CD4-positive, alpha-beta T cell (primary cell): ENCODE measurements at regions of chr12 and their contacts with region 1.

Region 1: GRCh38 chr12:124599074-124599999 is 31.9 kb upstream of the NCOR2 start:
- DNase-seq: peak in 2 of 14 experiments; percentile 40 to 51
- ATAC-seq: peak; percentile 43
- H3K4me3 ChIP-seq: no peak overlapping the region
- H3K4me3 Mint-ChIP-seq: no peak overlapping the region
- H3K27ac ChIP-seq: no peak overlapping the region
- H3K27ac Mint-ChIP-seq: no peak overlapping the region
- H3K4me1 ChIP-seq: no peaks in the 10 kb centered on the region
- H3K4me1 Mint-ChIP-seq: peaks cover 8% of the 10 kb centered on the region
- H3K27me3 ChIP-seq: no peaks in the 10 kb centered on the region
- H3K27me3 Mint-ChIP-seq: no peaks in the 10 kb centered on the region
- CTCF ChIP-seq: no peak

Region 2: GRCh38 chr12:124586756-124587155 is 12.6 kb before region 1 on chr12:
- CTCF ChIA-PET with region 1: interaction called, 3 read pairs
- POLR2A ChIA-PET with region 1: no interaction called
- intact Hi-C with region 1: loop called in 1 of 2 experiments (anchors 1 kb)
- DNase-seq: no peak
- ATAC-seq: no peak
- H3K4me3 ChIP-seq: no peak overlapping the region
- H3K4me3 Mint-ChIP-seq: no peak overlapping the region
- H3K27ac ChIP-seq: no peak overlapping the region
- H3K27ac Mint-ChIP-seq: no peak overlapping the region
- H3K4me1 ChIP-seq: peaks cover 10% of the 10 kb centered on the region
- H3K4me1 Mint-ChIP-seq: peaks cover 11% of the 10 kb centered on the region
- H3K27me3 ChIP-seq: no peaks in the 10 kb centered on the region
- H3K27me3 Mint-ChIP-seq: no peaks in the 10 kb centered on the region
- CTCF ChIP-seq: no peak